Transverse colon (tissue), 4 donors: ENCODE measurements at regions of chr9 and their contacts with region 1.

Region 1: GRCh38 chr9:18208154-18209059 is 265.5 kb upstream of the ADAMTSL1 start:
- DNase-seq: peak; percentile 81
- H3K4me3 ChIP-seq: no peak overlapping the region
- H3K27ac ChIP-seq: peak overlapping the region in 3 of 4 donors; percentile 36 to 70 (median 57)
- H3K4me1 ChIP-seq: peaks cover 0 to 28% (median 10%) of the 10 kb centered on the region in 4 donors
- H3K27me3 ChIP-seq: no peaks in the 10 kb centered on the region
- CTCF ChIP-seq: peak; percentile 48 to 80 (median 66)
- EP300 ChIP-seq: no peak
- POLR2A ChIP-seq: no peak

Region 2: GRCh38 chr9:16915126-16915831 is 1293.1 kb before region 1 on chr9:
- in situ Hi-C with region 1: no loop called
- intact Hi-C with region 1: no loop called
- DNase-seq: no peak
- H3K4me3 ChIP-seq: no peak overlapping the region
- H3K27ac ChIP-seq: no peak overlapping the region
- H3K4me1 ChIP-seq: no peaks in the 10 kb centered on the region
- H3K27me3 ChIP-seq: no peaks in the 10 kb centered on the region
- CTCF ChIP-seq: no peak
- EP300 ChIP-seq: no peak
- POLR2A ChIP-seq: no peak

Region 3: DNA sequence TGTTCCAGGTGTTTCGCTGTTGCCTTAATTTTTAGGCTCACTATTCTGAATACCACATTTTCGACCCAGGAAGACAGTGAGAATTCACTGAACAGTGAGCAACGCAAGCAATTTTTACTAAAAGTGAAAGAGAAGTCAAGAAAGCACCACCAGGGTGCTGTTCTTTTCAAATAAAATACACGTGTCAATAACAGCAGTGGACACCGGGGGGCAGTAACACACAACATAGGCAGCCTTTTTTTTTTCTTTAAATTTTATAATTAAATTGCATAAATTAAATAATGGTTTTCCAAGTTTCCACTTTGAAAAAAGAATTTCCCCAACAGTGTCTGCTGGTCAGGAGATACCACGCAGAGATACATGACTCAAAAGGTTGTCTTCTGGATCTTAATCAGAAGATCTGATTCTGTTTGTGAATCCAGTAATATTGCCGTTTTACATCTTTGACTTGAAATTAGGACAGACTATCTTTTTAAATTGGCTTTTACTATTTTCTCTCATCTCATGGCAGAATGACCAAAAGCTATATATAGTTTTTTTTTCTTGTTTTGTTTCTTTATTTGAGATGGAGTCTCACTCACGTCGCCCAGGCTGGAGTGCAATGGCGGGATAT is 676.7 kb before region 1 on chr9:
- in situ Hi-C with region 1: loop called in 3 of 4 experiments (anchors 25 kb)
- intact Hi-C with region 1: no loop called
- DNase-seq: peak; percentile 25
- H3K4me3 ChIP-seq: no peak overlapping the region
- H3K27ac ChIP-seq: no peak overlapping the region
- H3K4me1 ChIP-seq: no peaks in the 10 kb centered on the region
- H3K27me3 ChIP-seq: no peaks in the 10 kb centered on the region
- CTCF ChIP-seq: peak; percentile 62 to 79 (median 70)
- EP300 ChIP-seq: no peak
- POLR2A ChIP-seq: no peak

Region 4: DNA sequence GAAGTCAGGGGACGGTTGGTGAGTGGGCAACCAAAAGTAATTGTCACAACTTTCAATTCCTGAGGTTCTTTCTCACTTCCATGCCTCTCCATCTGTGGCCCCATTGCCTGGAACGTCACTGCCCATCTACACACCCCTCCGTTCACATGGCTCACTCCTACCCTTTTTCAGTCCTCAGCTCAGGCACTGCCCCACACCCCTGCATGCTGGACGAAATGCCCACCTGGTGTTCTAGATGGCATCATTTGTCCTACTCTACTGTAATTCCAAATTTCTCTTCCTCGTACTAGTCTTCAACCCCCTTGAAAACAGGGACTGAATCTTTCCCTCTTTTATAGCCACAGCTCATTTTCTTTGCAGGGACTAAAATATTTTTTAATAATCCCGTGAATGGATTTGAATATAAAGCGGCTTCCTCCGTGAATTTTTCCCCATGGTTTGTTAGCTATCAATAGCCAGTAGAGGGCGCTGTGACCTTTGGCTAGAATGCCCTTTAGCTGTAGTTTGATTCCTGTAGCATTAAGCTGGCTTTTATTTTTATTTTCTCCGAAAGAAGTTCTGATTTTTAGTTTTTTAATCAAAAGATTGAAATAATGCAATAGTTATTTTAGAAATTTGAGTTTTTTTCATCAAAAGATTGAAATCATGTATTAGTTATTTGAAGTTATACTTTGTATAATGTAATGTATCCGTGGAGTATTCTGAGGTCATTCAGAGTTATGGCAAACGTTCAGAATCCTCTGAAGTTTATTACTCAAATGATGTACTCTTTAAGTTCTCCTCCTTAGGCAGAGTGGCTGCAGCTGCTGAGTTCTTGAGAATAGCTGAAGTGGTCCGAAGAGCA is 397.5 kb before region 1 on chr9:
- in situ Hi-C with region 1: loop called (anchors 5 to 10 kb)
- intact Hi-C with region 1: loop called (anchors 2 kb)
- DNase-seq: peak; percentile 60
- H3K4me3 ChIP-seq: no peak overlapping the region
- H3K27ac ChIP-seq: no peak overlapping the region
- H3K4me1 ChIP-seq: peaks cover 0 to 14% (median 2%) of the 10 kb centered on the region in 4 donors
- H3K27me3 ChIP-seq: no peaks in the 10 kb centered on the region
- CTCF ChIP-seq: peak; percentile 81 to 90 (median 84)
- EP300 ChIP-seq: no peak
- POLR2A ChIP-seq: no peak

Region 5: DNA sequence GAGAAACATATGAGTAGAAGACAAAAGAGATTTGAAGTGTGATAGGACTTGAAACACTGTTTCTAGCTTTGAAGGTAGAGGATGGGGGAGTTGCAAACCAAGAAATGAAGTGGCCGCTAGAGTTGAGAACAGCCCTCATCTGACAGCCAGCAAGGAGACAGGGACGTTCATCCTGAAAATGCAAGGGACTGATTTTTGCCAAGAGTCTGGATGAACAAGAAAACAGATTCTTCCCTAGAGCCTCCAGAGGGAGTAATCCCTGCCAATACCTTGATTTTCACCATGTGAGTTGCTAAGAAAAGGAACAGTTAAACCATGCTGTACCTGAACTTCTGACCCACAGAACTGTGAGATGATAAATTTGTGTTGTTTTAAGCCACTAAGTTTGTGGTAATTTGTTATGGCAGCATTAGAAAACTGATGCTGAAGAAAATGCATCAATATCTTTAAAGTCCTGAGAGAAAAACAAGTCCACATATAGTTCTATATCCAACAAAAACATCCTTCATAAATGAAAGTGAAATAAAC is 111.6 kb after region 1 on chr9:
- in situ Hi-C with region 1: no loop called
- intact Hi-C with region 1: no loop called
- DNase-seq: no peak
- H3K4me3 ChIP-seq: no peak overlapping the region
- H3K27ac ChIP-seq: no peak overlapping the region
- H3K4me1 ChIP-seq: no peaks in the 10 kb centered on the region
- H3K27me3 ChIP-seq: no peaks in the 10 kb centered on the region
- CTCF ChIP-seq: no peak
- EP300 ChIP-seq: no peak
- POLR2A ChIP-seq: no peak